ENCODE measurements at regions of chr11 and their contacts with region 1.

Region 1: DNA sequence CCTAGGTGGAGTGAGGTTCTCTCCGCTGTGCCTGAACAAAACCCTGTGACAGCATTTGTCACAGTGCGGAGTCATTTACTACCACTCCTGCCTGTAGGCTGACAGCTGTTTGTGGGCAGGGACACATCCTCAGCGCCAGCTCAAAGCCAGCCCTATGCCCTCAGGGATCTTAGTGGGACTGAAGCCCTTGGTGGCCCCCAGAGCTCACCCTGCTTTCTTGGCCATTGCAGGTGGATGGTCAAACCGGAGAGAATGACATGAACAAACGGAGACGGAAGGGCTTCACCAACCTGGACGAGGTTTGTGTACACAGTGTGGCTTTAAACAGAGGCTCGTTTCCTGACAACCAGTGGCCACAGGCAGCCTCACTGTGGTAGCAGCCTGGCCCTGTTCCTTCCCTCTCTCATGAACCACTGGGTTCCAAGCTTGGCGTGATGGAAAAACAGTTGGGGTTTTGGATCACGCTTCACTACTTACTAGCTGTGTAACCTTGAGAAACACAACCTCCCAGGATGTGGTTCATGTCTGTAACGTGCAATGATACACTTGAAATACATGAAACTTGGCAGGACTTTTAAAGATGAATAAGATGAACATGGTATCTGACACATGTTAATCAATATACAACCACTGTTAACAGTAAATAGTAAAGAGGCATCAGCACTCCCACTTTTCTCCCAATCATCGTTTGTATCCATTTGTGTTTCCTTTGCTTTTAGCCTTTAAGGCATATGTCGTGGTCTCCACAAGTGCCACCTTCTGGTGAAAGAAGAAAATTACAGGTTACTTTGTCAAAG is 125.8 kb downstream of the MICAL2 start:
- DNase-seq: peak; percentile 56 to 73 (median 60)
- ATAC-seq: peak; percentile 82
- H3K4me3 ChIP-seq: no peak overlapping the region
- H3K27ac ChIP-seq: peak overlapping the region; percentile 21; the same call in 1 of the 3 replicates
- H3K4me1 ChIP-seq: peaks cover 0 to 7% of the 10 kb centered on the region in 2 experiments; a peak in 3 of 5 replicates
- H3K27me3 ChIP-seq: no peaks in the 10 kb centered on the region
- CTCF ChIP-seq: peak; percentile 61 to 77 (median 72); a peak in 5 of 6 replicates
- EP300 ChIP-seq: no peak
- POLR2A ChIP-seq: no peak
- RAD21 ChIP-seq: peak; percentile 87 to 88

Region 2: GRCh38 chr11:12087075-12088004 is 148.8 kb before region 1 on chr11:
- CTCF ChIA-PET with region 1: interaction called, 42 read pairs
- POLR2A ChIA-PET with region 1: interaction called, 4 read pairs
- in situ Hi-C with region 1: loop called (anchors 5 kb)
- intact Hi-C with region 1: loop called (anchors 1 kb)
- DNase-seq: peak in 2 of 4 experiments; percentile 28 to 31
- ATAC-seq: peak; percentile 58
- H3K4me3 ChIP-seq: no peak overlapping the region
- H3K27ac ChIP-seq: no peak overlapping the region
- H3K4me1 ChIP-seq: peaks cover 14 to 20% of the 10 kb centered on the region in 2 experiments
- H3K27me3 ChIP-seq: peaks cover 0 to 9% of the 10 kb centered on the region in 2 experiments; a peak in 1 of 5 replicates
- CTCF ChIP-seq: no peak
- EP300 ChIP-seq: no peak
- POLR2A ChIP-seq: no peak
- RAD21 ChIP-seq: no peak

Region 3: GRCh38 chr11:12159351-12160099 is 76.6 kb before region 1 on chr11:
- CTCF ChIA-PET with region 1: no interaction called
- POLR2A ChIA-PET with region 1: no interaction called
- in situ Hi-C with region 1: no loop called
- intact Hi-C with region 1: loop called (anchors 5 kb)
- DNase-seq: no peak
- ATAC-seq: peak; percentile 22
- H3K4me3 ChIP-seq: no peak overlapping the region
- H3K27ac ChIP-seq: no peak overlapping the region
- H3K4me1 ChIP-seq: peaks cover 39 to 56% of the 10 kb centered on the region in 2 experiments
- H3K27me3 ChIP-seq: no peaks in the 10 kb centered on the region
- CTCF ChIP-seq: no peak
- EP300 ChIP-seq: no peak
- POLR2A ChIP-seq: no peak
- RAD21 ChIP-seq: no peak

Region 4: DNA sequence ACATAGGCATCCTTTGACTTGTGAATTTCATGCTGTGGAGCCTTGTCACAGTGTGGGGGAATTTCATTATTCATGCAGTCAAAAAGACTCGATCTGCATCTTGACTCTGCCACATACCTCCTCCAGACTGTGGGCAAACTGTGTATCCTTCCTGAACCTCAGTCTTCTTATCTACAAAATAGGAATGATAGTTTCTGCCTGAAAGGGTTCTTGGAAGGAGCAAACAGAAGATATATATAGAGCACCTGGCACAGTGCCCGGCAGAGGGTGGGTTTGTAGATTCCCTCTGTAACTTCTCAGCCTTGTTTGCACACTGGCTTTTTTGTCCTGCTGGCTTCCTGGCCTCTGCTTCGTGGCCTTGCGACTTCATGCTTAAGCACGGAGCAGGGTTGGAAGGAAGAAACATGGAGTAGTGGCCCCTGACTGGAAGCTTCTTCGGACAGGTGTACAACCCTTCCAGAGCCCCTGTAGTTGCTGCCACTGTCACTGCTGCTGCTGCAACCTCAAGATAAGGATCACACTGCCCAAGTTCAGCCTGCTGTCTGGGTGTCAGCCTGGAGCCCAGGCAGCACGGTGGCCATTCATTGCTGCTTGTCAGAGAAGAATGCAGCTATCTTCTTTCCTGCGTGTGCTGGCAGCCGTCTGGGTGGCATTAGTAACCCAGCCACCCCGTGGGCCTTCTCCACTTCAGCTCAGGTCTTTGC is 19.3 kb before region 1 on chr11:
- CTCF ChIA-PET with region 1: no interaction called
- POLR2A ChIA-PET with region 1: interaction called, 10 read pairs
- in situ Hi-C with region 1: no loop called
- intact Hi-C with region 1: no loop called
- DNase-seq: peak in 1 of 4 experiments; percentile 40
- ATAC-seq: peak; percentile 43
- H3K4me3 ChIP-seq: no peak overlapping the region
- H3K27ac ChIP-seq: no peak overlapping the region
- H3K4me1 ChIP-seq: peaks cover 6 to 13% of the 10 kb centered on the region in 2 experiments; a peak in 4 of 5 replicates
- H3K27me3 ChIP-seq: no peaks in the 10 kb centered on the region
- CTCF ChIP-seq: no peak
- EP300 ChIP-seq: no peak
- POLR2A ChIP-seq: no peak
- RAD21 ChIP-seq: no peak

Region 5: DNA sequence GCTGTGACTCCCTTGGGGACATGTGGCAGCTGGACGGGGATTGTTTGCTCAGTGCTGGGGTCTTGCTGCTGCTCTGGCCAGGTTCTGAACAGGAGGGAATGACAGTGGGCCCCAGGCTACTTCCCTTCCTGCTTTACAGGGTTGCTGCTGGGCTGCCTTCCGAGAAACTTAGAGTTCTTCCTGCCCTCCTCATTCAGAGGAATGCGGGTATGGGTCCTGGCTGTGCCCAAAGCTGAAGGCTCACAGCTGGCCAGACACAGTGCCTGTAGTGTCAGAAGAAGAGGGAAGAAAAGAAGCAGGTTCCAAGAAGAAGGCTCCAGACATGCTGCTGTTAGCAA is 32.9 kb after region 1 on chr11:
- CTCF ChIA-PET with region 1: no interaction called
- POLR2A ChIA-PET with region 1: no interaction called
- in situ Hi-C with region 1: no loop called
- intact Hi-C with region 1: no loop called
- DNase-seq: no peak
- ATAC-seq: no peak
- H3K4me3 ChIP-seq: no peak overlapping the region
- H3K27ac ChIP-seq: no peak overlapping the region
- H3K4me1 ChIP-seq: peaks cover 18 to 27% of the 10 kb centered on the region in 2 experiments; a peak in 4 of 5 replicates
- H3K27me3 ChIP-seq: no peaks in the 10 kb centered on the region
- CTCF ChIP-seq: no peak
- EP300 ChIP-seq: no peak
- POLR2A ChIP-seq: no peak
- RAD21 ChIP-seq: no peak

Region 6: GRCh38 chr11:12281571-12282478 is 45.7 kb after region 1 on chr11:
- CTCF ChIA-PET with region 1: interaction called, 11 read pairs
- POLR2A ChIA-PET with region 1: no interaction called
- in situ Hi-C with region 1: no loop called
- intact Hi-C with region 1: loop called (anchors 2 kb)
- DNase-seq: peak; percentile 86 to 88 (median 87)
- ATAC-seq: peak; percentile 89
- H3K4me3 ChIP-seq: no peak overlapping the region
- H3K27ac ChIP-seq: no peak overlapping the region
- H3K4me1 ChIP-seq: peaks cover 8 to 13% of the 10 kb centered on the region in 2 experiments; a peak in 4 of 5 replicates
- H3K27me3 ChIP-seq: no peaks in the 10 kb centered on the region; a peak in 1 of 5 replicates
- CTCF ChIP-seq: peak; percentile 92 to 98 (median 98)
- EP300 ChIP-seq: no peak
- POLR2A ChIP-seq: no peak
- RAD21 ChIP-seq: peak; percentile 99